Heart left ventricle (tissue), 16 donors: ENCODE measurements at regions of chr3 and their contacts with region 1.

Region 1: GRCh38 chr3:189975391-189975990 is 145.2 kb downstream of the P3H2 start:
- DNase-seq: peak in 1 of 5 donors; percentile 39
- ATAC-seq: peak in 1 of 4 donors; percentile 28
- H3K4me3 ChIP-seq: no peak overlapping the region
- H3K27ac ChIP-seq: peak overlapping the region in 2 of 12 donors; percentile 2 to 40
- H3K4me1 ChIP-seq: peaks cover 0 to 9% (median 0%) of the 10 kb centered on the region in 12 donors
- H3K27me3 ChIP-seq: no peaks in the 10 kb centered on the region
- CTCF ChIP-seq: no peak
- POLR2A ChIP-seq: no peak

Region 2: GRCh38 chr3:189927975-189928895 is 47.3 kb before region 1 on chr3:
- intact Hi-C with region 1: no loop called
- DNase-seq: no peak
- ATAC-seq: no peak
- H3K4me3 ChIP-seq: no peak overlapping the region
- H3K27ac ChIP-seq: no peak overlapping the region
- H3K4me1 ChIP-seq: no peaks in the 10 kb centered on the region
- H3K27me3 ChIP-seq: no peaks in the 10 kb centered on the region
- CTCF ChIP-seq: no peak
- POLR2A ChIP-seq: no peak

Region 3: GRCh38 chr3:190012314-190012782 is 36.9 kb after region 1 on chr3:
- intact Hi-C with region 1: loop called in 1 of 10 experiments (anchors 5 kb)
- DNase-seq: no peak
- ATAC-seq: no peak
- H3K4me3 ChIP-seq: no peak overlapping the region
- H3K27ac ChIP-seq: no peak overlapping the region
- H3K4me1 ChIP-seq: peaks cover 0 to 9% (median 0%) of the 10 kb centered on the region in 12 donors
- H3K27me3 ChIP-seq: peaks cover 0 to 2% (median 0%) of the 10 kb centered on the region in 9 donors
- CTCF ChIP-seq: no peak
- POLR2A ChIP-seq: no peak